ENCODE measurements at regions of chr6 and their contacts with region 1.

Region 1: DNA sequence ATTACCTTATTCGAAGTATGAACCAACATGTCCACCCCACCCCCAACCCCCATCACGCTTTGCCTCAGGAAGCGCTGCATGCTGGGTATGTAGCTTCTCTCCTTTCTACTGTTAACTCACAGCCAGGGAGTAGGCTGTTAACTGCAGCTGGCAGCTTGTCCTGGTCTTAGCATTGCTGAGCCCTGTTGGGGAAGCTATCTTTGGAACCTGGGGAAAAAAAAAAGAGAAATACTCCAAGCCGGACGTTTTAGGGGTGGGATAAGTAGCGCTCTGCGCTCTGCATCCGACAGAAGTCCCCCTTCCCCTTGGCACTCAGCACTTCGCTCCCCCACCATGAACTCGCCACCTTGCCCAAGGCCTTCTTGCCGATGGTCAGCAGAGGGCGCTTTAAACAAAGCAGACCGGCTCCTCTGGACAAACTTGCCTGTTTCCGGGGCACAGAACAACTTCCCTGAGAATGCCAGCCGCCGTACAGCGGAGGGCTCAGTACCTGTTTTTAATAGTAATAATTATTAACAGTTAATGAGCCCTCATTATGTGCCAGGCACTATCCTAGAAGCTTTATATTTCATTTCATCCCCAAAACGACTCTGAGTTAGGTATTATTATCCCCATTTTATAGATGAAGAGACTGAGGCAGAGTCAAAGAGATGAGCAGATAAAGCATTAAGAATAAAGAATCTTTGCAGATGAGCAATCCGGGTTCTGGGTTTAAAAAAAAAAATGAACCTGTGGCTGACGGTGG is 35.2 kb upstream of the MDFI start:
- DNase-seq: peak; percentile 68 to 80
- ATAC-seq: peak; percentile 83 to 87
- H3K4me3 ChIP-seq: peak overlapping the region; percentile 23; the same call in 1 of the 3 replicates
- H3K27ac ChIP-seq: peak overlapping the region; percentile 59 to 80; a peak in 5 of 6 replicates
- H3K4me1 ChIP-seq: peaks cover 4% of the 10 kb centered on the region; the same call in 1 of the 3 replicates
- CTCF ChIP-seq: peak; percentile 79
- EP300 ChIP-seq: no peak
- POLR2A ChIP-seq: no peak
- RAD21 ChIP-seq: peak; percentile 82 to 83

Region 2: DNA sequence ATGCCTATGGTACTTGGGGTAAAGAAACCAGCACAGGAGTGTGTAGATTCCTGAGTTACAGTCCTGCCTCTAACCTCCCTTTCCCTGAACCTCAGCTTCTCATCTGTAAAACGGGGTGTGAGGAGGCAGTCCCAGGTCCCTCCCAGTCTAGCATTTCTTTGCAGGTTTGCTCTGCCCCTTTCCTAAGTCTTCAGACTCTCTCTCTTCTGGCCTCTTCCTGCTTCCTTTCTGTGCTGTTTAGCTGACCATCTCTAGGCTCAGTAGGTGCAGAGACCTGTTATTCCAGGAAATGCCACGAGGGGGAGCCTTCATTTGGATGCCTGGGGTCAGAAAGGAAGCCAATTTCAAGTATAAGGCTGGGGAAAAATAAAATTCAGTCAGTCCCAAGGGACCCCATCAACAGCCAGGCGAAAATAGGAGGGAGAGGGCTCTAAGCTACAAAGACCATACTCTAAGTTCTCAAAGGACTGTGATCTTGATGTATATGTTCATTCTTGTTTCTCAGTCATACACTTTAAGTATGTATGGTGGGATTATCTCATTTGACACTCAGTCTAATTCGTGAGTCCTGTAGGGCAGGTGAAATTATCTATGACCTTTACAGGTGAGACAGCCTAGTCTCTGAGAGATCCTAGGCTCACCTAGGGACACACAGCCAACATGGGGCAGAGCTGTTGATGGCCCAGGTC is 178.5 kb before region 1 on chr6:
- CTCF ChIA-PET with region 1: interaction called, 44 read pairs
- POLR2A ChIA-PET with region 1: no interaction called
- DNase-seq: peak; percentile 64
- ATAC-seq: peak; percentile 75 to 89; a peak in 5 of 6 replicates
- H3K4me3 ChIP-seq: no peak overlapping the region
- H3K27ac ChIP-seq: peak overlapping the region in 1 of 2 experiments; percentile 59; a peak in 2 of 6 replicates
- H3K4me1 ChIP-seq: 0 out of 3 replicates have a peak, but pooled peaks cover 4% of the 10 kb centered on the region
- CTCF ChIP-seq: peak; percentile 63
- EP300 ChIP-seq: no peak
- POLR2A ChIP-seq: no peak
- RAD21 ChIP-seq: peak; percentile 59 to 63; a peak in 4 of 5 replicates

Region 3: DNA sequence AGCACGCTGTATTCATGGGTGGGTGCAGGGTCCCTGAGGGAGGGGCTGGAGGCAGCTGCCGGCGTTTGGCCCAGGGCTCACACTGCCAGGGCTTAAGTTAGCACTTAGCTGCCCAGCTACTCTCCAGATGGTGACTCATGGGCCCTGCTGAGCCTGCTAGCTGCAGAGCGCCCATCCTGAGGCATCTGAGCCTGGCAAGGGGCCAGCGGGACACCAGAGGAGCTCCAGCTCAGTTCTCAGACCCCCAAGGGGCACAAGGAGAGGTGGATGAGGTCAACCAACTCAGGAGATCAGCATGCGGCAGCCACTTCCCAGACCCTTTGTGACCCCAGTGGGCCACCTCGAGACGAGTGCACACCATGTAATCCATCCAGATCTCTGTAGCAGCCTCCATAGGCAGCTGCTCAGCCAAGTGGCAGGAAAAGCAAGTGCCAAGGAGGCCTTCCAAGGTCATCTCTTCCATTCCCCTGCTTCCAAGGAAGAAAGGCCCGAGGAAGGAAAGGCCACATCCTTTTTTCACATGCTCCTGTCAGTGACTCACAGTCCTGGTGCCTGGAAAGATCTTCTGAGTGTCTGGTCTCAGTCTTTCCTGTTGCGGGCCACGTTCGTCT is 21.6 kb before region 1 on chr6:
- CTCF ChIA-PET with region 1: interaction called, 10 read pairs
- POLR2A ChIA-PET with region 1: no interaction called
- DNase-seq: peak; percentile 81 to 82
- ATAC-seq: peak; percentile 69 to 83
- H3K4me3 ChIP-seq: no peak overlapping the region
- H3K27ac ChIP-seq: peak overlapping the region; percentile 89 to 92
- H3K4me1 ChIP-seq: peaks cover 84% of the 10 kb centered on the region
- CTCF ChIP-seq: no peak
- EP300 ChIP-seq: peak in 1 of 2 experiments; percentile 49; a peak in 1 of 5 replicates
- POLR2A ChIP-seq: no peak
- RAD21 ChIP-seq: no peak; a peak in 1 of 5 replicates

Region 4: GRCh38 chr6:41591859-41592502 is 11.1 kb before region 1 on chr6:
- CTCF ChIA-PET with region 1: interaction called, 13 read pairs
- POLR2A ChIA-PET with region 1: no interaction called
- DNase-seq: peak; percentile 43 to 77
- ATAC-seq: peak; percentile 78 to 90
- H3K4me3 ChIP-seq: no peak overlapping the region
- H3K27ac ChIP-seq: no peak overlapping the region
- H3K4me1 ChIP-seq: peaks cover 5% of the 10 kb centered on the region; the same call in 2 of the 3 replicates
- CTCF ChIP-seq: peak; percentile 73
- EP300 ChIP-seq: no peak
- POLR2A ChIP-seq: no peak
- RAD21 ChIP-seq: peak; percentile 90 to 92

Region 5: DNA sequence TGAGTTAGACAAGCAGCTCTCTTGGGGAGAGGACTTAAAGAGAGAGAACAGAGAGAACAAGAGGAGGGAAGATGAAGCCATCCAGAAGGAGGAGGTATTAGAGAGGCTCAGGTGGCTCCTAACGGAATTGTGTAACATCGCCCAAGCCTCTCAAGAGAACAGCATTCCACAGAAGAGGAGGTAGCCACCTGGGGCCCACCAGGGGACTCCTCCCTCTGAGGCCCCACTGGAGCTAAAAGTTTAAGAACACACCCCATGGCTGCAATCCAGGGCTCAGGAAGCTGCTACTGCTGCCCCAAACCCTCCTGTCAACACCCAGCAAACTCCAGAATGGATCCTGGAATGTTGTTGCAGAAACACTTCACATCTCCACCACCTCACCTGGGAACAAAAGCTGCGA is 11.7 kb after region 1 on chr6:
- CTCF ChIA-PET with region 1: interaction called, 11 read pairs
- POLR2A ChIA-PET with region 1: no interaction called
- DNase-seq: no peak
- ATAC-seq: no peak
- H3K4me3 ChIP-seq: no peak overlapping the region
- H3K27ac ChIP-seq: no peak overlapping the region
- H3K4me1 ChIP-seq: no peaks in the 10 kb centered on the region
- CTCF ChIP-seq: no peak
- EP300 ChIP-seq: no peak
- POLR2A ChIP-seq: no peak
- RAD21 ChIP-seq: no peak

Region 6: DNA sequence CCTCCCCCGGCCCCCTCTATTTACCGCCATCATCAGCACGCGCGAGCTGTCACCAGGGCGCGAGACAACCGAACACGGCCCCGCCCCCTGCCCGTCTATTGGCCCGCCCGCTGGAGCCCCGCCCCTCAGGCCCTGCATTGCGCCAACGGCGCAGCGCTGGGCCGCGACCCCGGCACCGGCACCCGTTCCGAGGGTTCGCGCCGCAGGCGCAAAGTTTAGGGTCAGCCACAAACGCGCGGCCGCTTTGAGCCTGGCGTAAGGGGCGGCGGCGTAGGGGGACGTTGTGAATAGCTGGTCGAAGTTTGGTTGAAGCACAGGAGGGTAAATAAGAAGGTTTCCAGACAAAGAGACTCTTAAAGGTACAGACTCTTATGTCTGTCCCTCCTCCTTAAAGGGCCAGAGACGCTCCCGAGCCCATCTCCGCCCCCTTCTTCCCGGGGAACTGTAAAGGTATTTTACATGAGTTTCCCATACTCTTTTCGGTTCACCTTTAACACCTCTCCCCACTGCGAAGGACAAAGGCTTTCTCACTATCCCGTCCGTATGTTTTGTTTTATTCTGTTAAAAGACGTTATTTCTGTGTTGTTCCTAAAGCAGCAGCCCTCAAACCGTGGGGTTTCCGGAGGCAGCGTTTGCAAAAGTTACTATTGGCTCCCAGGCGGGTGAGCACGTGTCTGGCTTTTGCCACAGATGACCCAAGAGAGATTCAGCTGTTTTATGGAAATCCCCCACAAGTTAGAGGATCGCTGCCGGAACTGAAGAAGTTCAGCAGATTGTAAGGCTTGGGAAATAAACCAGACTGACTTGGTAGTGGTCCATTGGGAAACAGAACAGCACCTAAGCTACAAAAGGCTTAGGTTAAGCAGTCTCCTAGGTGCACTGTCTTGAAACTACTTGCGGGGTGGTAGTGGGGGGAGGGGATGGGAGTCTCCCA is 292.5 kb after region 1 on chr6 and contains the start of gene USP49:
- CTCF ChIA-PET with region 1: no interaction called
- POLR2A ChIA-PET with region 1: no interaction called
- DNase-seq: peak; percentile 67 to 78
- ATAC-seq: peak; percentile 95 to 96
- H3K4me3 ChIP-seq: peak within 1 kb of the TSS; percentile 78
- H3K27ac ChIP-seq: peak within 1 kb of the TSS; percentile 70 to 91
- H3K4me1 ChIP-seq: peaks cover 24% of the 10 kb centered on the region
- CTCF ChIP-seq: no peak
- EP300 ChIP-seq: no peak
- POLR2A ChIP-seq: no peak
- RAD21 ChIP-seq: no peak
- polyA plus RNA-seq, gene USP49: 2.9 TPM in 2 replicates

Measured in A549 (cell line).